ENCODE measurements at regions of chr1 and their contacts with region 1.

Region 1: GRCh38 chr1:64917328-64917861 is 49.0 kb downstream of the JAK1 start:
- DNase-seq: peak; percentile 97
- H3K4me3 ChIP-seq: no peak overlapping the region
- H3K27me3 ChIP-seq: no peaks in the 10 kb centered on the region
- CTCF ChIP-seq: no peak

Region 2: GRCh38 chr1:64928325-64928724 is 10.9 kb after region 1 on chr1:
- CTCF ChIA-PET with region 1: no interaction called
- POLR2A ChIA-PET with region 1: interaction called, 12 read pairs
- DNase-seq: no peak
- H3K4me3 ChIP-seq: no peak overlapping the region
- H3K27me3 ChIP-seq: no peaks in the 10 kb centered on the region
- CTCF ChIP-seq: no peak

Measured in BJ (cell line).